Activated T-helper 1 cell treated with anti-CD3 and anti-CD28 coated beads, Interleukin-12 subunit alpha, Interleukin-12 subunit beta, Interleukin-2, Interleukin-4 antibody, amounts not matched to agents 30 ng/mL and 10 ng/mL and 1 ng/mL, durations not matched to agents 14 hours and 24 hours and 36 hours (primary cell): ENCODE measurements at regions of chr1 and their contacts with region 1.

Region 1: DNA sequence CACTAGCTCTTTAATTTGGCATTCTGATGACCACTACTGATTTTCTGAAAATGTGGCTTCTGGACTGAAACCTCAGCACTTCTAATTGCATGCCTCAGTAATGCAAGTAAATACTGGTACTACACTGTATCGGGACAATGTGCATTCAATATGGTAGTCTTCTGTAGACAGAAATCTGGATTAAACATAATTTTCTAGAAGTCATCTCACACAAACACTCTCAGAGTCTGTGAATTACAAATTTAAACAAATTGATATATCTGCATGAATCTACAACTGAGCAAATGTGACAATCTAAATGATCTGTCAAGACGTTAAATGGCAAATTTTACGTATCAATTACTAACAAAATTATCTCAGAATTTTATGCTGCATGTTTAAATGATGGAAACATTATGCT is 23.7 kb downstream of the HP1BP3 start:
- DNase-seq: no peak
- H3K4me3 Mint-ChIP-seq: no peak overlapping the region
- H3K27ac Mint-ChIP-seq: no peak overlapping the region
- H3K4me1 Mint-ChIP-seq: no peaks in the 10 kb centered on the region
- H3K27me3 Mint-ChIP-seq: no peaks in the 10 kb centered on the region

Region 2: DNA sequence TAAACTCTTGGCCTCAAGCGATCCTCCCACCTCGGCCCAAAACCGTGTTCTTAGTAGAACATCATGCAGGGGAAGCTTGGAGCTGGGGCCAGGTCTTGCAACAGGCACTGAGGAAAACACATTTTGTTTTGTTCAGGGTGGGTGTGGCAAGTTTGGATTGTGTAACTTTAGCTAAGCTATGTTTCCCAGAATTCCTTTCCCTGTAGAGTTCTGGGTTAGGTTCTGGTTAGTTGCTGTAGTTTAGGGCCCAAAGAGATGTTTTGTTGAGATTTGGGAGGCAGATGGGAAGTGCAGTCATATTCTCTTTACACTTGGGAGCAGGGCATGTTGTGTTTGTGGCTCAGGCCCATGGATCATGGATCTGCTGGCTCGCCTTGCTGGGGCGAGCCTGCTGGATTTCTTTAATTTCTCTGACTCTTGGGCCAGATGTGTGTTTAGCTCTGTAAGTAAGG is 669.5 kb before region 1 on chr1:
- intact Hi-C with region 1: no loop called
- DNase-seq: no peak
- H3K4me3 Mint-ChIP-seq: no peak overlapping the region
- H3K27ac Mint-ChIP-seq: no peak overlapping the region
- H3K4me1 Mint-ChIP-seq: no peaks in the 10 kb centered on the region
- H3K27me3 Mint-ChIP-seq: peaks cover 4% of the 10 kb centered on the region

Region 3: DNA sequence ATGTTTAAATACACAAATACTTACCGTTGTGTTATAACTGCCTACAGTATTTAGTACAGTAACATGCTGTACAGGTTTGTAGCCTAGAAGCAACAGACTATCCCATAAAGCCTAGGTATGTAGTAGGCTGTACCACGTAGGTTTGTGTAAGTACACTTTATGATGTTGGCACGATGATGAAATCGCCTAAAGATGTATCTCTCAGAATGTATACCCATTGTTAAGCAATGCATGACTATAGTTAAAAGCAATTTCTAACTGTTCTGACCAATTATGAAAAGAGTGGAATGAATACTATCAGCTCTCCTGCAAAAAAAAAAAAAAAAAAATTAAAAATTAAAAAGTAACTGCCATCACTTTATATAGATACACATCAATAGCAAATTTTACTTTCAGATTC is 12.3 kb after region 1 on chr1:
- intact Hi-C with region 1: loop called (anchors 2 kb)
- DNase-seq: no peak
- H3K4me3 Mint-ChIP-seq: no peak overlapping the region
- H3K27ac Mint-ChIP-seq: no peak overlapping the region
- H3K4me1 Mint-ChIP-seq: peaks cover 12% of the 10 kb centered on the region
- H3K27me3 Mint-ChIP-seq: no peaks in the 10 kb centered on the region